ENCODE measurements at regions of chr12 and their contacts with region 1.

Region 1: DNA sequence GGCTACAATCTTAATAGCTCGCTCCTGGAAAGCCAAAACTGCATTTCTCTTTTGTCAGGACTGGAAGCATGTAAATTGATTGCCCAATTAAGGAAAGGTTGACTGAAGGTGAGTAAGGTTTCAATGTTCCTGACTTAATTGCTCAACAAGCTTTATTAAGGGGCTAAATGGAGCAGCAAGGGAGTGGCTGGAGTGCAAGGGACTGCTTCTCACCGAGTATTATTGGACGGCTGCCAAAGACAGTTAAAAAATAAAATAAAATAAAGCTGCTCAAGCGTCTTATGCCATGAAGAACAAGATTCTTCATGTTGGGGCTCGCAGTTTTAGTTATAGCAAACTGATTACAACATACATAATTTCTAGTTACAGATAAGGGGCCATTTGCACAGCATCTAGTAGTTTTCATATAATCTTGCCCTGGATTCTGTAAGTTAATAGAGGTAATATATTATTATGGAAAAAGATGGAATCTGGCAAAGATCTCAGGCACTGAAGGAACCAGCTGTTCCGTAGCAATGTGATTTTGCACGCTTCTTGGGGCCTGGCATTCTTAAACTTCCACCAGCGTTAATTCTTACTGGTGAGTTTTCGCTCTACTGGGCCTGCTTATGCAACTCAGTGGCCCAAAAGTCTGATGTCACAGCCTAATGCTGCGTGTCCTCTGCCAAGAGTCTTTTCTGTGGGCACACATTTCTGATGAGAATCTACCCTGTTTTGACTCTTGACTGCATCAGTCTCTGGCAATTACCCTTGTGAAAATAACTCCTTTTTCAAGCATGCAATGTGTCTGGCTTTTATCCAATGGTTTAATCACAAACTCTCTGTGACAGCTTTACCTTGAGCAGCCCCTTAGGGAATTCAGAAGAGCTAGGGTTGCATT is 108.5 kb downstream of the SLC38A1 start:
- DNase-seq: peak; percentile 93
- H3K4me3 Mint-ChIP-seq: peak overlapping the region; percentile 51
- H3K27ac Mint-ChIP-seq: peak overlapping the region; percentile 77
- H3K4me1 Mint-ChIP-seq: peaks cover 18% of the 10 kb centered on the region
- H3K27me3 Mint-ChIP-seq: no peaks in the 10 kb centered on the region
- CTCF ChIP-seq: no peak

Region 2: GRCh38 chr12:45990468-45991283 is 169.7 kb before region 1 on chr12 and contains the start of gene SCAF11:
- CTCF ChIA-PET with region 1: interaction called, 3 read pairs
- POLR2A ChIA-PET with region 1: interaction called, 23 read pairs
- intact Hi-C with region 1: no loop called
- DNase-seq: peak; percentile 99
- H3K4me3 Mint-ChIP-seq: peak within 1 kb of the TSS; percentile 91
- H3K27ac Mint-ChIP-seq: peak within 1 kb of the TSS; percentile 93
- H3K4me1 Mint-ChIP-seq: peaks cover 31% of the 10 kb centered on the region
- H3K27me3 Mint-ChIP-seq: no peaks in the 10 kb centered on the region
- CTCF ChIP-seq: peak; percentile 85
- total RNA-seq, gene SCAF11: 106 and 107 TPM in 2 replicates

Region 3: DNA sequence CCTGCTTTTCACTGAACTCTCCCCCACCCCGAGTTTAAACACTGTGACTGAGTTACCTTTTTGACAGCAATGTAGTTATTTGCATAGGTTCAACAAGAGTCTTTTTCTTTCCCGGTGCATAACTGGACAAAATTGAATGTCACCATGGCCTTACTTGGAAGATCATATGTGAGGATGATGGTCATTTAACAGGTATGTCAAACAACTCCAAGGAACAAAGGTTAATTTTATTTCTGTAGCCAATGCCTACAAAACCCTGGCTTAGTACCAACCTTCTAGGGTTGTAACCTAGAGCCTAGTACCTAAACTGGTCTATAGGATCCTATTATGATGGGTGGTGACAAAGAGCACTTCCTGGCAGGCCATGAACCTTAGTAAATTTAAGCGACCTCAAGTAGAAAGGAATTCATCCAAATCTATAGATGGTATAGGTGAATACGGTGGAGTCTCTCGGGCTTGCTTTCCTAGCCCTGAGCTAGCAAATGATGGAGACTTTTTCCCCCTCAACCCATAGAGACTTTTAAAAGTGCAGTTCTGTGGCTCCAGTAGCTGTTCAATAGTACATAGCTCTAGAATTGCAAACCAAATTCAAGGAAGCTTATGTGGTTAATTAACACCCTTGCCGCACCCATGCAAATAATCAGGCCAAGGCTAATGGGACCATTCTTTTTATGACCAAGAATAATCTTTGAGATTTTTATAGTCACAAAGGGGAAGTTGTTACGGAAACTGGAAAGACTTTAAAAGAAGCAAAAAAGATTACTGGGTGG is 19.5 kb after region 1 on chr12:
- CTCF ChIA-PET with region 1: no interaction called
- POLR2A ChIA-PET with region 1: interaction called, 11 read pairs
- intact Hi-C with region 1: no loop called
- DNase-seq: no peak
- H3K4me3 Mint-ChIP-seq: no peak overlapping the region
- H3K27ac Mint-ChIP-seq: no peak overlapping the region
- H3K4me1 Mint-ChIP-seq: no peaks in the 10 kb centered on the region
- H3K27me3 Mint-ChIP-seq: no peaks in the 10 kb centered on the region
- CTCF ChIP-seq: no peak

Region 4: DNA sequence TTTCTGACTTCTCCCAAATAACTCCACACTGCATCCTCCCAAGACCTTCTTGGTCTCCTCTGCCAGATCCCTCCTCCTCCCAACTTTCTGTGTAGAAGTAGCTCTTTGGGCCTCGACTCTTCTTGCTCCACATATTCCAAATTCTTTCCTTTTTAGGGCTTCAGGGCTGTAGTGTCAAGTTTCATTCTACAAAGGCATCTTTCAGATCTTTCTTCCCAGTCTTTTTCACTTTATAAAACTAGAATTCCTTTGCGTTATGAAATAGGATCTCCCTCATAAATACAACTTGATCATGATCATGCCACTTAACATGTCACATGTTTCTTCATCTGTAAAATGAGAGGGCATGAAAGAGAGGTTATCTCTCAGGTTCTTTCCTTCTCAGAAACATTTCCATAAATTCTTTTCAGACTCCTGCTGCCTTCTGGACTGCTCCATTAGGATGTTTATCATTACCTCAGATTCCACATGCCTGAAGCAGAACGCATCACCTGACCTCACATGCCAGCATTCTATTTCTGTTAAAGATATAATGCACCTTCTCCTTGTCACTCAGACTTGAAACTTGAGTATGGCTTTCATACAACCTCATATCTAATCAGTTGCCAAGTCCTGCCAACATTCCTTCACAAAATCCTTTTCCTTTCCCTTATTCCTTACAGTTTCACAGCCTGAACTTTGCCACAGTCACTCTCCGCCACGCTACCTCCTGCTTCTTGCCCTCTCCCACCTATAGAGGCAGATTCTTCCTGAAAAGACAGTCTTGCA is 100.0 kb after region 1 on chr12:
- CTCF ChIA-PET with region 1: interaction called, 4 read pairs
- POLR2A ChIA-PET with region 1: interaction called, 37 read pairs
- intact Hi-C with region 1: no loop called
- DNase-seq: no peak
- H3K4me3 Mint-ChIP-seq: no peak overlapping the region
- H3K27ac Mint-ChIP-seq: no peak overlapping the region
- H3K4me1 Mint-ChIP-seq: peaks cover 14% of the 10 kb centered on the region
- H3K27me3 Mint-ChIP-seq: no peaks in the 10 kb centered on the region
- CTCF ChIP-seq: no peak

Region 5: DNA sequence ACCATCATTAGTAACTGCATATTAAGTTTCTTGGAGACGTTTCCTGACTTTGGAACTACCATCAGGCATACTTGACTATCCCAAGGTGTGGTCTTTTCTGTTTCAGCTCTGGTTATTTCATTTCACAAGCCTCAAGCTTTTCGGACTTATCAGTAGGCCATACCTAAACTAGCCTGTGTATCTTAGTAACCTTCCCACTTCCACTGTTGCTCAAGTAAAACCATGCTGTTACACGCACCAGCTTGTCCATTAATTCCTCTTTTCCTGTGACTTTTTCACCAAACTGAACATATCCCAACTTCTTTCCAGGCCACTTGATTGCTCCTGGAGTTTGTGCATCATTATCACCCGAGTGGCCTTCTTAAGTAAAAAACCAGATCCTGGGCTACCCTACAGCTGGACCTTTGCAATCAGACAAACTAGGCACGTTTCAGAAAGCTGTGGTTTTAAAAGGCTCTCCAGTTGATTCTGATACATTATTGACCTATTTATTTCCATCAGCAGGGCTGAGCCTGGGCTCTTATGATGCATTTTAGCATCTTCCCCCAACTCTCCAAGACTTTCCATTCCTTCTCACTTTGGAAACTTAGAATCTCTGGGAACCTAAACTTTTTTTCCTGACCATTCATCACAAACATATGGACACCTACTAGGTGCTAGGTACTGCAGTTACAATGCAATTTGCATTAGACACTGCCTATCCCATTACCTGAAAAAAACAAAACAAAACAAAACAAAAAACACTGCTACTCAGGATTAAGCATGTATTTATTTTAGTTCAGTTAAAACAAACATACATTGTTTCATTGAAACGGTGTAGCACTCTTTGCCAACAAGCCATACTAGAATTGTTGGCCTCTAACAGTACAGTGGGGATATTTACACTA is 197.3 kb after region 1 on chr12:
- CTCF ChIA-PET with region 1: interaction called, 3 read pairs
- POLR2A ChIA-PET with region 1: interaction called, 14 read pairs
- intact Hi-C with region 1: no loop called
- DNase-seq: peak; percentile 72
- H3K4me3 Mint-ChIP-seq: no peak overlapping the region
- H3K27ac Mint-ChIP-seq: peak overlapping the region; percentile 7
- H3K4me1 Mint-ChIP-seq: peaks cover 18% of the 10 kb centered on the region
- H3K27me3 Mint-ChIP-seq: no peaks in the 10 kb centered on the region
- CTCF ChIP-seq: no peak

Region 6: GRCh38 chr12:46364777-46365580 is 204.6 kb after region 1 on chr12:
- CTCF ChIA-PET with region 1: no interaction called
- POLR2A ChIA-PET with region 1: interaction called, 16 read pairs
- intact Hi-C with region 1: no loop called
- DNase-seq: peak; percentile 85
- H3K4me3 Mint-ChIP-seq: peak overlapping the region; percentile 93
- H3K27ac Mint-ChIP-seq: no peak overlapping the region
- H3K4me1 Mint-ChIP-seq: peaks cover 24% of the 10 kb centered on the region
- H3K27me3 Mint-ChIP-seq: no peaks in the 10 kb centered on the region
- CTCF ChIP-seq: no peak